SK-MEL-5 (cell line): ENCODE measurements at regions of chr9 and their contacts with region 1.

Region 1: DNA sequence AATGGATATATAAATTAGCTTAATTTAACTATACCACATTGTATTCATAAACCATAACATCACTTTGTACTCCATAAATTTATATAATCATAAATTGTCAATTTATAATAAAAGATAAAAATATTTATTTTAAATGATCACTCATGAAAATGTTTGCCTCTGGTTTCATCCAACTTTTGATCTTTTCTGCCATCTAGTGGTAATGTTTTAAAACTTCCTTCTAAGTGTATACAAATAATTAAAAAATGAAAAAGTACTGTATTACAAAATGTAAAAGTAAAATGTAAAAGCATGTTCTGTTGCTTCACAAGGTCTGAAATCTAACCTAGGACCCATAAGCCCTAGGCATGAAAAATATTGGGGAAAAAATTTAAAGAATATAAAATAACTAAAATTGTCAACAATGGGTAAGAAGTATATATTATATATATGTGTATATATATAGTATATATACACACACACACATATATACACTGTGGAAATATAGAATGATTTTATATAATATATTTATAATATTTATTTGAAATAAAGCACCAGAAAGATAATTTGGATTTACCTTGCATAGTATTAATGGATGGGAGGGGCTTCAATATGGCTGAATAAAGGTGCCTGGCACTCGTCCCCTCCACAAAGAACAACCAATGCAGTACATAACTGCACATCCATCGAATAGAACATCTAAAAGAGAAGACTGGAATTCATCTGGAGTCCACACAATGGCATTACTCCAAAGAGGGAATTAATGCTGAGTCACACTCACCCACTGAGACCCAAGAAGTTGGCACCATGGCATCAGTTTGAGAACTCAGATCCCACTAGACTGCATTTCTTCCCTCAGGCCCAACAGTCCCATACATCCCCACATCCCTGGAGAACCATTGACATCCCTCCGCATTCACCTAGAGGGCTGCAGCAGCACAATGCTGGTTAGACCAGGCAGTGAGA is 32.5 kb downstream of the ANXA1 start:
- DNase-seq: peak; percentile 61

Region 2: GRCh38 chr9:72856972-72857623 is 327.1 kb before region 1 on chr9:
- in situ Hi-C with region 1: loop called (anchors 25 kb)
- DNase-seq: peak; percentile 88